Common myeloid progenitor, CD34-positive (primary cell): ENCODE measurements at regions of chr6 and their contacts with region 1.

Region 1: GRCh38 chr6:151323791-151324487 is 67.4 kb downstream of the ZBTB2 start:
- DNase-seq: peak; percentile 47 to 71 (median 68)
- H3K4me3 ChIP-seq: peak overlapping the region in 1 of 7 experiments; percentile 42
- H3K27ac ChIP-seq: no peak overlapping the region
- H3K4me1 ChIP-seq: peaks cover 0 to 15% (median 7%) of the 10 kb centered on the region in 4 experiments
- H3K27me3 ChIP-seq: peaks cover 4 to 34% (median 13%) of the 10 kb centered on the region in 5 experiments

Region 2: GRCh38 chr6:150891888-150892485 is 432.0 kb before region 1 on chr6:
- CTCF ChIA-PET with region 1: interaction called, 260 read pairs
- POLR2A ChIA-PET with region 1: no interaction called
- DNase-seq: peak; percentile 57 to 83 (median 73)
- H3K4me3 ChIP-seq: no peak overlapping the region
- H3K27ac ChIP-seq: no peak overlapping the region
- H3K4me1 ChIP-seq: peaks cover 0 to 3% (median 0%) of the 10 kb centered on the region in 4 experiments
- H3K27me3 ChIP-seq: no peaks in the 10 kb centered on the region

Region 3: DNA sequence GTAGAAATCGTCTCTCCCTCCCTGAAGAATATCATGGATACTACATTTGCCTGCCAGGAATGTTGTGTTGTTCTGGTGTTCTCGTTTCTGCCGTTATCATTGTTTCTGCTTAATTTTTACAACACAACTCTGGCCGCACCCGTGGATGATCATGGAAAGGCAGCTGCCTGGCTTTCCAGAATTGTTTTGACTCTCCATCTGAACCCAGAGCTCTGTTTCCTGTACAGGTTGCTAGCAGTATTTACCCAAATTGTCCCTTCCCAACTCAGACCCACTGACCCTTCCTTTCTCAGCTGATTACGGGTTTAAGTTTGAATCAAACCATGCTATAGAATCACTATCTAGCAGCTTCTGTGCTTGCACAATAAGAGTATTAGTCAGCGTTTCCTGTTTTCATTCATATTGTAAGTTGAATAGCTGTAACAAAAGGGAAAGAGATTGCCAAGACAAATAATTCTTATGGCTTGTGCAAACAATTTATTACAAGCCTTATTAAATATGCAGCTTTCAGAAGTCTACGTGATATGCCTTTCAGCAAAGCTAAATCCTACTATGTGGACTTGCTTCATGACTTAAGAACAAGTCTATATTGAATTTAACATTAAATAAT is 319.4 kb before region 1 on chr6:
- CTCF ChIA-PET with region 1: interaction called, 12 read pairs
- POLR2A ChIA-PET with region 1: no interaction called
- DNase-seq: peak; percentile 57 to 84 (median 71)
- H3K4me3 ChIP-seq: peak overlapping the region in 2 of 7 experiments; percentile 42 to 43
- H3K27ac ChIP-seq: peak overlapping the region in 1 of 2 experiments; percentile 19
- H3K4me1 ChIP-seq: peaks cover 6 to 22% (median 15%) of the 10 kb centered on the region in 4 experiments
- H3K27me3 ChIP-seq: no peaks in the 10 kb centered on the region

Region 4: DNA sequence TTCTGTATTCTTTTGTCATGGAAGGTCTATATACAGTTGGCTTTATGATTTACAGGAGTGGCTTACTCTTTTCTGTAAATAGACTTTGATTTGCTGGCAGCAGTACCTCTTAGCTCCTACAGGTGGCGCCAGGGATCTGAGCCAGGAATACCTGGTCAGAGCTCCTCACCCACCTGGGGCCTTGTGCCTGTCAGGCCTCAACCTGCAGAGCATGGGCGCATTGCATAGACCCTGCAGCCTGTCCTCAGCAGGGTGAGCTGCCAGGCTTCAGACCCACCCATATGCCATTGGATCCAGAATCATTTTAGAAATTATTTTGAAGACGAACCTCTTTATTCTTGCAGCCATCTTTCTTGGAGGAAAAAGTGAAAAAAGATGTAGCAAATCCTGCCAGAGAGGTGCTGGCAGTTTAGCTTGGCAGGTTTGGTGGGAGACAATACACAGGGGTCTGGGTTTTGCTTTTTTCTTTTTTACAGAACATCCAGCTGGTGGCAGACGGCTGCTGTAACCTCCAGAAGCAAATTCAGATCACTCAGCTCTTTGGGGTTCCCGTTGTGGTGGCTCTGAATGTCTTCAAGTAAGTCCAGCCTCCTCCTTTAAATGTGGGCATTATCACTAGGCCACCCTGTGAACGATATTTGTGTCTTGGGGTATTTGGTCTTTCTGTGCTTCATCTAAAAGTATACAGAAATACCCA is 309.4 kb before region 1 on chr6:
- CTCF ChIA-PET with region 1: interaction called, 109 read pairs
- POLR2A ChIA-PET with region 1: no interaction called
- DNase-seq: peak; percentile 57 to 74 (median 63)
- H3K4me3 ChIP-seq: no peak overlapping the region
- H3K27ac ChIP-seq: no peak overlapping the region
- H3K4me1 ChIP-seq: no peaks in the 10 kb centered on the region
- H3K27me3 ChIP-seq: no peaks in the 10 kb centered on the region

Region 5: GRCh38 chr6:151021896-151022295 is 302.0 kb before region 1 on chr6:
- CTCF ChIA-PET with region 1: interaction called, 109 read pairs
- POLR2A ChIA-PET with region 1: no interaction called
- DNase-seq: no peak
- H3K4me3 ChIP-seq: no peak overlapping the region
- H3K27ac ChIP-seq: no peak overlapping the region
- H3K4me1 ChIP-seq: no peaks in the 10 kb centered on the region
- H3K27me3 ChIP-seq: no peaks in the 10 kb centered on the region

Region 6: GRCh38 chr6:151205721-151206600 is 118.0 kb before region 1 on chr6:
- CTCF ChIA-PET with region 1: no interaction called
- POLR2A ChIA-PET with region 1: no interaction called
- DNase-seq: no peak
- H3K4me3 ChIP-seq: no peak overlapping the region
- H3K27ac ChIP-seq: no peak overlapping the region
- H3K4me1 ChIP-seq: no peaks in the 10 kb centered on the region
- H3K27me3 ChIP-seq: peaks cover 0 to 5% (median 0%) of the 10 kb centered on the region in 5 experiments

Region 7: GRCh38 chr6:151229401-151230276 is 94.3 kb before region 1 on chr6:
- CTCF ChIA-PET with region 1: no interaction called
- POLR2A ChIA-PET with region 1: no interaction called
- DNase-seq: no peak
- H3K4me3 ChIP-seq: no peak overlapping the region
- H3K27ac ChIP-seq: peak overlapping the region in 1 of 2 experiments; percentile 65
- H3K4me1 ChIP-seq: no peaks in the 10 kb centered on the region
- H3K27me3 ChIP-seq: peaks cover 0 to 2% (median 1%) of the 10 kb centered on the region in 5 experiments

Region 8: DNA sequence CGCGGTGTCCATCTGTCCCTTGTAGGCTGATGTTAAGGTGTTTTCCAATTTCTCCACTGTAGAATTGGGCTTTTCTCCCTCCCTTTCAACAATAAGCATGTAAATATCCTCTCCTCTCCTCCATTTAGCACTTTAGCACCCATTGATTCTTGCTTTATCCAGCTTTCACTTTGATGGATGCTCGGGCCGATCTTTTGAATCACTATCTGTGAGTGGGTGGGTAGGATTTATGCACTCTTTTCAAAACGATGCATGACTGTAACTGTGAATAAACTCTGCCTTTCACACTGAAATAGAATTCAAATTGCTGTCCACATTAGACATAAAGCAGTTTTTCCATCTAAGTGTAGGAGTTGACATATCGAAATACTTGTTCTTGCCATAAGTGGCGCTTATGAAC is 14.9 kb after region 1 on chr6:
- CTCF ChIA-PET with region 1: interaction called, 15 read pairs
- POLR2A ChIA-PET with region 1: no interaction called
- DNase-seq: no peak
- H3K4me3 ChIP-seq: no peak overlapping the region
- H3K27ac ChIP-seq: no peak overlapping the region
- H3K4me1 ChIP-seq: no peaks in the 10 kb centered on the region
- H3K27me3 ChIP-seq: peaks cover 0 to 4% (median 0%) of the 10 kb centered on the region in 5 experiments